Activated CD4-positive, alpha-beta T cell treated with anti-CD3 and anti-CD28 coated beads, Interleukin-2, amount 10 ng/mL, durations not matched to agents 24 days and 14 days (primary cell): ENCODE measurements at regions of chr6 and their contacts with region 1.

Region 1: GRCh38 chr6:16670183-16670582 is 91.1 kb downstream of the ATXN1 start:
- DNase-seq: no peak
- H3K4me3 Mint-ChIP-seq: peak overlapping the region; percentile 70
- H3K27ac Mint-ChIP-seq: peak overlapping the region; percentile 97
- H3K4me1 Mint-ChIP-seq: peaks cover 64% of the 10 kb centered on the region
- H3K27me3 Mint-ChIP-seq: no peaks in the 10 kb centered on the region

Region 2: DNA sequence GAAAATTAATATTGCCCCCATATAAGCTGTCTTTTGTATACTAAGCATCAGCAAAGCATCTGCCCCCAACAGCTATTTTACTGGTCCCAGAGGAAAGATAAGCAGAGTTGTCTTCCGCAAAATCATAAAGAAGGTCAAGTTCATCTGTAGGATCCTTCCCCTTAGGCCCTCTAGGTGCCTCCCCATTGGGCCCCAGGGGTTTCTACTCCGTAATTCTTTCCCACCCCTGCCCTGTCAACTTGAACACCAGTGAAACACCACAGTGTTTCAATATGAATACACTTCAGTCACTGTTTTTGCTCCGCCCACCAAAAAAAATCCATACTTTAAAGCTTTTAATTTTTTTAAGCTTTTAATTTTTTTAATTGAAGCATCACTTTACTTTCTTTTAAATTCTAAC is 68.1 kb before region 1 on chr6:
- intact Hi-C with region 1: loop called (anchors 5 kb)
- DNase-seq: peak; percentile 68
- H3K4me3 Mint-ChIP-seq: peak overlapping the region; percentile 9
- H3K27ac Mint-ChIP-seq: peak overlapping the region; percentile 27
- H3K4me1 Mint-ChIP-seq: peaks cover 27% of the 10 kb centered on the region
- H3K27me3 Mint-ChIP-seq: no peaks in the 10 kb centered on the region

Region 3: GRCh38 chr6:16723826-16724225 is 53.6 kb after region 1 on chr6:
- intact Hi-C with region 1: no loop called
- DNase-seq: no peak
- H3K4me3 Mint-ChIP-seq: no peak overlapping the region
- H3K27ac Mint-ChIP-seq: peak overlapping the region; percentile 56
- H3K4me1 Mint-ChIP-seq: peaks cover 49% of the 10 kb centered on the region
- H3K27me3 Mint-ChIP-seq: no peaks in the 10 kb centered on the region

Region 4: GRCh38 chr6:17431581-17431980 is 761.4 kb after region 1 on chr6:
- intact Hi-C with region 1: no loop called
- DNase-seq: no peak
- H3K4me3 Mint-ChIP-seq: no peak overlapping the region
- H3K27ac Mint-ChIP-seq: no peak overlapping the region
- H3K4me1 Mint-ChIP-seq: no peaks in the 10 kb centered on the region
- H3K27me3 Mint-ChIP-seq: no peaks in the 10 kb centered on the region